Activated CD4-positive, alpha-beta T cell treated with anti-CD3 and anti-CD28 coated beads for 36 hours (primary cell): ENCODE measurements at regions of chr12 and their contacts with region 1.

Region 1: GRCh38 chr12:11581179-11581755 is 68.2 kb upstream of the ETV6 start:
- DNase-seq: peak; percentile 83
- ATAC-seq: no peak
- H3K4me3 Mint-ChIP-seq: no peak overlapping the region
- H3K27ac Mint-ChIP-seq: no peak overlapping the region
- H3K4me1 Mint-ChIP-seq: peaks cover 19% of the 10 kb centered on the region
- H3K27me3 Mint-ChIP-seq: peaks cover 5% of the 10 kb centered on the region

Region 2: DNA sequence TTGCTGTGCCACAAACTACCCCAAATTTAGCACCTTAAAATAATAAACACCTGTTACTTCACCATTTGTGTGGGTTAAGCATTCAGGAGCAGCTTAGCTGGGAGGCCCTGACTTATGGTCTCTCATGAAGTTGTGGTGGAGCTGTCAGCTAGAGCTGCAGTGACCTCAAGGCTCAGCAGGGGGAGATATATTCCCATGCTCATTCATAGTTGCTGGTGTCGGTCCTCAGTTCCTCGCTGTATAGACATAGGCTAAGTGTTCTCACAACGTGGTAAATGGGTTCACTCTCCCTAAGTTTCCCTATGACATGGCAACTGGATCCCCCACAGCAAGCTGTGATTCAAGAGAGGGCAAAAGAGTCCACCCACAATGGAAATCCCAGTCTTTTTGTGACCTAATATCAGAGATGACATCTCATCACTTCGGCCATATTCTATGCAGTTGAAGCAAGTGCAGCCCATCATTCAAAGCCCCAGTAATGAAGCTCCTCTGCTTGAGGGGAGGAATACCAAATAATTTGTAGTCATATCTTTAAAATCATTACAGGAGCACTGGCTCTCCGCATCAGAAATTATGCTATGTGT is 352.9 kb before region 1 on chr12:
- CTCF ChIA-PET with region 1: no interaction called
- POLR2A ChIA-PET with region 1: no interaction called
- intact Hi-C with region 1: no loop called
- DNase-seq: peak; percentile 51
- ATAC-seq: peak; percentile 47
- H3K4me3 Mint-ChIP-seq: no peak overlapping the region
- H3K27ac Mint-ChIP-seq: no peak overlapping the region
- H3K4me1 Mint-ChIP-seq: no peaks in the 10 kb centered on the region
- H3K27me3 Mint-ChIP-seq: no peaks in the 10 kb centered on the region

Region 3: GRCh38 chr12:11553871-11554533 is 27.3 kb before region 1 on chr12:
- CTCF ChIA-PET with region 1: interaction called, 7 read pairs
- POLR2A ChIA-PET with region 1: no interaction called
- intact Hi-C with region 1: loop called (anchors 2 kb)
- DNase-seq: peak; percentile 76
- ATAC-seq: peak; percentile 79
- H3K4me3 Mint-ChIP-seq: no peak overlapping the region
- H3K27ac Mint-ChIP-seq: no peak overlapping the region
- H3K4me1 Mint-ChIP-seq: peaks cover 28% of the 10 kb centered on the region
- H3K27me3 Mint-ChIP-seq: no peaks in the 10 kb centered on the region

Region 4: GRCh38 chr12:11765817-11766794 is 184.8 kb after region 1 on chr12:
- CTCF ChIA-PET with region 1: interaction called, 3 read pairs
- POLR2A ChIA-PET with region 1: no interaction called
- intact Hi-C with region 1: loop called (anchors 5 kb)
- DNase-seq: peak; percentile 90
- ATAC-seq: peak; percentile 89
- H3K4me3 Mint-ChIP-seq: peak overlapping the region; percentile 32
- H3K27ac Mint-ChIP-seq: peak overlapping the region; percentile 84
- H3K4me1 Mint-ChIP-seq: peaks cover 100% of the 10 kb centered on the region
- H3K27me3 Mint-ChIP-seq: no peaks in the 10 kb centered on the region

Region 5: GRCh38 chr12:11812586-11813427 is 231.5 kb after region 1 on chr12:
- CTCF ChIA-PET with region 1: interaction called, 3 read pairs
- POLR2A ChIA-PET with region 1: no interaction called
- intact Hi-C with region 1: loop called in 1 of 2 experiments (anchors 1 kb)
- DNase-seq: peak; percentile 42
- ATAC-seq: peak; percentile 49
- H3K4me3 Mint-ChIP-seq: peak overlapping the region; percentile 46
- H3K27ac Mint-ChIP-seq: peak overlapping the region; percentile 72
- H3K4me1 Mint-ChIP-seq: peaks cover 60% of the 10 kb centered on the region
- H3K27me3 Mint-ChIP-seq: no peaks in the 10 kb centered on the region

Region 6: GRCh38 chr12:11877869-11878780 is 296.9 kb after region 1 on chr12:
- CTCF ChIA-PET with region 1: no interaction called
- POLR2A ChIA-PET with region 1: no interaction called
- intact Hi-C with region 1: loop called (anchors 1 to 5 kb)
- DNase-seq: peak; percentile 32
- ATAC-seq: peak; percentile 28
- H3K4me3 Mint-ChIP-seq: no peak overlapping the region
- H3K27ac Mint-ChIP-seq: peak overlapping the region; percentile 73
- H3K4me1 Mint-ChIP-seq: peaks cover 52% of the 10 kb centered on the region
- H3K27me3 Mint-ChIP-seq: no peaks in the 10 kb centered on the region

Region 7: GRCh38 chr12:12327802-12328201 is 746.5 kb after region 1 on chr12:
- CTCF ChIA-PET with region 1: interaction called, 3 read pairs
- POLR2A ChIA-PET with region 1: no interaction called
- intact Hi-C with region 1: loop called in 1 of 2 experiments (anchors 2 kb)
- DNase-seq: no peak
- ATAC-seq: peak; percentile 64
- H3K4me3 Mint-ChIP-seq: no peak overlapping the region
- H3K27ac Mint-ChIP-seq: peak overlapping the region; percentile 44
- H3K4me1 Mint-ChIP-seq: peaks cover 9% of the 10 kb centered on the region
- H3K27me3 Mint-ChIP-seq: no peaks in the 10 kb centered on the region

Region 8: GRCh38 chr12:12600255-12601034 is 1019.2 kb after region 1 on chr12:
- CTCF ChIA-PET with region 1: no interaction called
- POLR2A ChIA-PET with region 1: no interaction called
- intact Hi-C with region 1: no loop called
- DNase-seq: no peak
- ATAC-seq: no peak
- H3K4me3 Mint-ChIP-seq: no peak overlapping the region
- H3K27ac Mint-ChIP-seq: no peak overlapping the region
- H3K4me1 Mint-ChIP-seq: no peaks in the 10 kb centered on the region
- H3K27me3 Mint-ChIP-seq: no peaks in the 10 kb centered on the region